MCF 10A (cell line): ENCODE measurements at regions of chr2 and their contacts with region 1.

Region 1: DNA sequence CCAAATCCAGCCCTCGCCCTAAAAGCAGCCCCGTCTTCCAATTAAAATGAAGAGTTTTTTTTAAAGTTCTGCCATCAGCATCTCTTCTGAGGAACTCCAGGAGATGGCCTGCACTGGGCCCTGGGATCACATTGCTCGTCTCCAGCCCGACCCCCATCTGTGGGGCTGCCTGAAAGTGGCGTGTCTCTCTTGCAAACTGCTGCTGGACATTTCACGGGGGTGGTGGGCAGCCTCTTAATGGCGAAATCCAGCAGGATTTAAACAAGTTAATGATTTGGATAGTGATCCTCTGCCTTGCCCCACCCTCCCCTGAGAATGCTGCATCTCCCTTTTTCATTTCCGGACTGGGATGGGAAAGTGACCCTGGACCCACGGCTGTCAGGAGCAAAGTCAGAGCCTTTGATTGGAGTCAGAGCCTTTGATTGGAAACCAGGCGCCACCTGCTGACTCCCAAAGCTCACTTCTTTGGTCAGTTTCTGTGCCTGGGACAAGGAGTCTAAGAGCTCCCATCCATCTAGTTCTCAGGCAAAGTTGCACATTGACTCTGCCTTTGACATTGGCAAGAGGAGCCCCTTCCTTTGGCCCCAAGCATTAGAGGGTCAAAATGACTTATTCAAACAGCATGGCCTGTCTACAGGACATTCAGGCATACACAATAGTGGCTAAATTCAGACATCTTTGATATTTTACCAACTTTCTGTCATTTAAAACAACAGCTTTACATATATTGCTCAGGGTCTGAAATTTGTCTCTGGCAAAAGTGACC is 155.2 kb downstream of the SH3BP4 start:
- DNase-seq: peak; percentile 83
- H3K4me3 Mint-ChIP-seq: no peak overlapping the region
- H3K27ac Mint-ChIP-seq: no peak overlapping the region
- H3K4me1 Mint-ChIP-seq: no peaks in the 10 kb centered on the region
- H3K27me3 Mint-ChIP-seq: no peaks in the 10 kb centered on the region
- CTCF ChIP-seq: peak; percentile 79

Region 2: DNA sequence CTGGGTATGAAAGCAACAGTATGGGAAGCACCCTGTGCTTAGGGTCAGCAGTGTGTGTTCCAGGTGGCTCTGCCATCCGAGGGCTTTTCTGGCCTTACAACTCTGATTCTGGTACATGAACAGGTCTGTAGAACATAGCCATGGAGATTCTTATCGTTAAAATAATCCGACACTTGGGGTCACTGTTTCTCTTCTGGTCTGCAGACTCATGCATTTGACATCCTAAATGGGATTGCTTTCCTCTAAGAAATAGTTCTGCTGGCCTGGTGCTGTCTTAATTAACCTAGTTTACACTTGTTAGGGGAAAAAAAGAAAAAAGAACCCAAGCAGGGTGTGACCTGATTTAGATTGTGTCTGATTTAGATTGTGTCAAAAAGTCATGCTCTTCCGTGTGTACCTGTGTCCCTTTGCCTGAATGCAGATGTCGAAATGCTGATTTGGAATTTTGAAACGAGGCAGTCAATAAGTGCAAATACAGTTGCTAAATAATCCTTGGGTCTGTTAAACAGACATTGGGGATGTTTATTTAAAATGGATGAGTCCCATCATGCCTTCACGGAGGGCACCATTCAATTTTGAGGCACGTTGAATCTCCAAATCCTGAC is 1130.3 kb before region 1 on chr2:
- CTCF ChIA-PET with region 1: interaction called, 4 read pairs
- POLR2A ChIA-PET with region 1: no interaction called
- intact Hi-C with region 1: loop called (anchors 5 kb)
- DNase-seq: peak; percentile 75
- H3K4me3 Mint-ChIP-seq: no peak overlapping the region
- H3K27ac Mint-ChIP-seq: no peak overlapping the region
- H3K4me1 Mint-ChIP-seq: peaks cover 29% of the 10 kb centered on the region
- H3K27me3 Mint-ChIP-seq: no peaks in the 10 kb centered on the region
- CTCF ChIP-seq: peak; percentile 68

Region 3: GRCh38 chr2:234544659-234545611 is 562.1 kb before region 1 on chr2:
- CTCF ChIA-PET with region 1: interaction called, 33 read pairs
- POLR2A ChIA-PET with region 1: interaction called, 3 read pairs
- intact Hi-C with region 1: loop called (anchors 1 kb)
- DNase-seq: peak; percentile 68
- H3K4me3 Mint-ChIP-seq: no peak overlapping the region
- H3K27ac Mint-ChIP-seq: no peak overlapping the region
- H3K4me1 Mint-ChIP-seq: no peaks in the 10 kb centered on the region
- H3K27me3 Mint-ChIP-seq: no peaks in the 10 kb centered on the region
- CTCF ChIP-seq: peak; percentile 87

Region 4: GRCh38 chr2:234550511-234551107 is 556.4 kb before region 1 on chr2:
- CTCF ChIA-PET with region 1: interaction called, 33 read pairs
- POLR2A ChIA-PET with region 1: interaction called, 4 read pairs
- intact Hi-C with region 1: loop called (anchors 1 kb)
- DNase-seq: peak; percentile 77
- H3K4me3 Mint-ChIP-seq: no peak overlapping the region
- H3K27ac Mint-ChIP-seq: no peak overlapping the region
- H3K4me1 Mint-ChIP-seq: peaks cover 5% of the 10 kb centered on the region
- H3K27me3 Mint-ChIP-seq: no peaks in the 10 kb centered on the region
- CTCF ChIP-seq: peak; percentile 90

Region 5: GRCh38 chr2:234555720-234556119 is 551.3 kb before region 1 on chr2:
- CTCF ChIA-PET with region 1: interaction called, 30 read pairs
- POLR2A ChIA-PET with region 1: interaction called, 4 read pairs
- intact Hi-C with region 1: loop called (anchors 1 kb)
- DNase-seq: no peak
- H3K4me3 Mint-ChIP-seq: no peak overlapping the region
- H3K27ac Mint-ChIP-seq: no peak overlapping the region
- H3K4me1 Mint-ChIP-seq: no peaks in the 10 kb centered on the region
- H3K27me3 Mint-ChIP-seq: no peaks in the 10 kb centered on the region
- CTCF ChIP-seq: no peak

Region 6: GRCh38 chr2:234881413-234882241 is 225.4 kb before region 1 on chr2:
- CTCF ChIA-PET with region 1: interaction called, 9 read pairs
- POLR2A ChIA-PET with region 1: interaction called, 4 read pairs
- intact Hi-C with region 1: loop called (anchors 2 kb)
- DNase-seq: peak; percentile 95
- H3K4me3 Mint-ChIP-seq: peak overlapping the region; percentile 41
- H3K27ac Mint-ChIP-seq: no peak overlapping the region
- H3K4me1 Mint-ChIP-seq: peaks cover 9% of the 10 kb centered on the region
- H3K27me3 Mint-ChIP-seq: no peaks in the 10 kb centered on the region
- CTCF ChIP-seq: peak; percentile 67